H1 (cell line): ENCODE measurements at regions of chr20 and their contacts with region 1.

Region 1: GRCh38 chr20:37392421-37393178 is 46.7 kb downstream of the SRC start:
- DNase-seq: no peak
- H3K4me3 ChIP-seq: no peak overlapping the region
- H3K27ac ChIP-seq: no peak overlapping the region
- H3K4me1 ChIP-seq: peaks cover 0 to 32% (median 23%) of the 10 kb centered on the region in 4 experiments; a peak in 6 of 7 replicates
- H3K27me3 ChIP-seq: no peaks in the 10 kb centered on the region
- CTCF ChIP-seq: peak; percentile 61 to 81 (median 71)
- EP300 ChIP-seq: no peak
- POLR2A ChIP-seq: no peak
- RAD21 ChIP-seq: peak; percentile 59 to 78

Region 2: DNA sequence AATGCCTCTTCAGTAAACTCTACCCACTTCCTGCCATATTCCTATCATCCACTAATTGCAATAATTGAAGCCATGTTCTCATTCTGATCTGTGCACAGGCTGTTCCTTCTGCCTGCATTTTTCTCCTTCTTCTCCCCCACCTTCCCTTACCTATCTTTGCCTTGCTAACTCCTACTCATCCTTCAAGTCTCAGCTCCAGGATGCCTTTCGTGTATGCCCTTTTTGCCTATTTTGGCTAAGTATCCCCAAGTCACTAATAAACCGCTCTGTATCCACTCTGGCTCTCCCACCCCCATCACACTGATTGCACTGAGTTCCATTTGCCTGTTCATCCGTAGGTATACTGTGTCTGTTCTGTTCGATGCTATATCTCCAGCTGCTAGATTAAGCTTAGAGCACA is 219.8 kb before region 1 on chr20:
- CTCF ChIA-PET with region 1: no interaction called
- POLR2A ChIA-PET with region 1: no interaction called
- DNase-seq: no peak
- H3K4me3 ChIP-seq: no peak overlapping the region
- H3K27ac ChIP-seq: no peak overlapping the region
- H3K4me1 ChIP-seq: no peaks in the 10 kb centered on the region
- H3K27me3 ChIP-seq: no peaks in the 10 kb centered on the region
- CTCF ChIP-seq: no peak
- EP300 ChIP-seq: no peak
- POLR2A ChIP-seq: no peak
- RAD21 ChIP-seq: no peak

Region 3: GRCh38 chr20:37411408-37412219 is 19.0 kb after region 1 on chr20:
- CTCF ChIA-PET with region 1: interaction called, 9 read pairs
- POLR2A ChIA-PET with region 1: interaction called, 24 read pairs
- DNase-seq: no peak
- H3K4me3 ChIP-seq: peak overlapping the region in 1 of 4 experiments; percentile 32; a peak in 1 of 8 replicates
- H3K27ac ChIP-seq: no peak overlapping the region
- H3K4me1 ChIP-seq: peaks cover 11 to 54% (median 31%) of the 10 kb centered on the region in 4 experiments
- H3K27me3 ChIP-seq: peaks cover 0 to 22% (median 14%) of the 10 kb centered on the region in 4 experiments; a peak in 4 of 7 replicates
- CTCF ChIP-seq: no peak
- EP300 ChIP-seq: no peak
- POLR2A ChIP-seq: no peak
- RAD21 ChIP-seq: 0 out of 4 replicates have a peak, but pooled peaks of 1 of the 2 experiments have one; percentile 8

Region 4: GRCh38 chr20:37501940-37502339 is 109.3 kb after region 1 on chr20:
- CTCF ChIA-PET with region 1: interaction called, 11 read pairs
- POLR2A ChIA-PET with region 1: interaction called, 8 read pairs
- DNase-seq: no peak
- H3K4me3 ChIP-seq: no peak overlapping the region
- H3K27ac ChIP-seq: no peak overlapping the region
- H3K4me1 ChIP-seq: peaks cover 7 to 15% (median 10%) of the 10 kb centered on the region in 4 experiments; a peak in 6 of 7 replicates
- H3K27me3 ChIP-seq: no peaks in the 10 kb centered on the region
- CTCF ChIP-seq: peak; percentile 41 to 58 (median 56)
- EP300 ChIP-seq: no peak
- POLR2A ChIP-seq: no peak
- RAD21 ChIP-seq: peak; percentile 47 to 64; a peak in 3 of 4 replicates

Region 5: DNA sequence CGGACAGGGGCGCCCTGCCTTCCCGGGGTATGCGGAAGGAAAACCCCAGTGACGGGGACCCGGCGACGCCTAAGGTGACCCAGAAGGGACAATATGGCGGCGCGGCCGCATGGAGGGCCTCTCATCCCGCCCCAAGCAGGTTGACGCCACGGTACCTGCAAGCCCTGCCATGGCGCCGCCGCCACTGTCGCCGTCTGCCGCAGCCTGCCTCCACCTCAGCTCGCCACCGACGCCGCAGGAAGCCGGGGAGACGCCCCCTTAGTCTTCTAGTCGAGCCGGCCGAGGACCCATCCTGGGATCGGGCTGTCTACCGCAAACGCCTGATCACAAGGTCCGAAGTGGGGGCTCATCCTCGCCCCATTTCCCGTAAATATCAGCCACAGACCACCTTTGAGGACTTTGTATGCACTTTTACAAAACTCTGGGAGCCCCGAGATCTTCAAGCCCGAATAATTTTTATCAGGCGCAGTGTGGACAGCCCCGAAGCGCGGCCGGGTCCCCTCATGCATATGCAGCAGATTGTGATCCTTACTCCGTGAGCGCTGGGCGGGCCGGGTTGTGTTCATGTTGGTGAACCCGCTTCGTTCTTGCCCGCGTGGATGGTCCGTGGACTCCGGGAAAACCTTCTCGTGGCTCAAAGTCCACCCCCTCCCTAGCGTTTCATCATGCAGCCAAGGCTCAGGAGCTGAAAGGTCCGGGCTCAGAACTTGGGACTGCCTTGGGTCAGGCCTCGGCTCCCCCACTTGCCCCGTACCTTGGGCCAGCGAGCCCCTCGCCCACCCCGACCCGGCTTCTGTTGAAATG is 135.2 kb after region 1 on chr20 and contains the start of gene BLCAP:
- CTCF ChIA-PET with region 1: interaction called, 39 read pairs
- POLR2A ChIA-PET with region 1: interaction called, 11 read pairs
- DNase-seq: peak; percentile 51 to 93
- H3K4me3 ChIP-seq: peak within 1 kb of the TSS; percentile 72 to 99 (median 92)
- H3K27ac ChIP-seq: peak within 1 kb of the TSS; percentile 99
- H3K4me1 ChIP-seq: peaks cover 9 to 28% (median 13%) of the 10 kb centered on the region in 4 experiments
- H3K27me3 ChIP-seq: no peaks in the 10 kb centered on the region; a peak in 1 of 7 replicates
- CTCF ChIP-seq: 0 out of 4 replicates have a peak, but pooled peaks of 1 of the 3 experiments have one; percentile 1
- EP300 ChIP-seq: no peak
- POLR2A ChIP-seq: peak; percentile 61 to 95
- RAD21 ChIP-seq: no peak
- total RNA-seq, gene BLCAP: 51.1 and 60.3 TPM in 2 replicates